ENCODE measurements at regions of chr2 and their contacts with region 1.

Region 1: GRCh38 chr2:173982918-173983317 is 17.7 kb upstream of the SP3 start:
- DNase-seq: peak; percentile 94
- H3K4me3 Mint-ChIP-seq: no peak overlapping the region
- H3K27ac Mint-ChIP-seq: peak overlapping the region; percentile 79
- H3K4me1 Mint-ChIP-seq: peaks cover 52% of the 10 kb centered on the region
- H3K27me3 Mint-ChIP-seq: no peaks in the 10 kb centered on the region
- CTCF ChIP-seq: no peak

Region 2: DNA sequence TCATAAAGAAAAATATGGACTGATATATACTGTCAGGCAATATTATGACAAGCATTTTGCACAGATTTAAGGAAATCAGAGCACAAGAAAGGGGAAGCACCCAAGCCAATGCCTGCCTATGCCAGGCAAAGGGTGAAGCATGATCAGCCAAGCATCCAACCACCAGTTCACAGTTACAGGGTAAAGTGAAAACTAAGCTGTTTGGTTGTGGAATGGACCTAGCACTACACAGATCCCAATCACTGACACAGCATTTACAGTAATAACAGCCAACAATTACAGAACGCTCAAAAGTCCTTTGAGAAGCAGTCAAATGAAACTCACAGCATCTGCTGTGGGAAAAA is 108.1 kb before region 1 on chr2:
- CTCF ChIA-PET with region 1: no interaction called
- POLR2A ChIA-PET with region 1: no interaction called
- intact Hi-C with region 1: no loop called
- DNase-seq: no peak
- H3K4me3 Mint-ChIP-seq: no peak overlapping the region
- H3K27ac Mint-ChIP-seq: no peak overlapping the region
- H3K4me1 Mint-ChIP-seq: no peaks in the 10 kb centered on the region
- H3K27me3 Mint-ChIP-seq: peaks cover 6% of the 10 kb centered on the region
- CTCF ChIP-seq: no peak

Region 3: GRCh38 chr2:173972603-173973002 is 10.3 kb before region 1 on chr2:
- CTCF ChIA-PET with region 1: interaction called, 3 read pairs
- POLR2A ChIA-PET with region 1: interaction called, 25 read pairs
- intact Hi-C with region 1: no loop called
- DNase-seq: no peak
- H3K4me3 Mint-ChIP-seq: no peak overlapping the region
- H3K27ac Mint-ChIP-seq: no peak overlapping the region
- H3K4me1 Mint-ChIP-seq: peaks cover 7% of the 10 kb centered on the region
- H3K27me3 Mint-ChIP-seq: no peaks in the 10 kb centered on the region
- CTCF ChIP-seq: no peak

Region 4: GRCh38 chr2:174117951-174118930 is 135.3 kb after region 1 on chr2:
- CTCF ChIA-PET with region 1: no interaction called
- POLR2A ChIA-PET with region 1: no interaction called
- intact Hi-C with region 1: no loop called
- DNase-seq: peak; percentile 47
- H3K4me3 Mint-ChIP-seq: peak overlapping the region; percentile 8
- H3K27ac Mint-ChIP-seq: peak overlapping the region; percentile 79
- H3K4me1 Mint-ChIP-seq: peaks cover 21% of the 10 kb centered on the region
- H3K27me3 Mint-ChIP-seq: no peaks in the 10 kb centered on the region
- CTCF ChIP-seq: no peak

Region 5: GRCh38 chr2:174764280-174765255 is 781.6 kb after region 1 on chr2 and contains the start of gene CHRNA1:
- CTCF ChIA-PET with region 1: no interaction called
- POLR2A ChIA-PET with region 1: no interaction called
- intact Hi-C with region 1: no loop called
- DNase-seq: no peak
- H3K4me3 Mint-ChIP-seq: no peak within 1 kb of the TSS
- H3K27ac Mint-ChIP-seq: no peak within 1 kb of the TSS
- H3K4me1 Mint-ChIP-seq: no peaks in the 10 kb centered on the region
- H3K27me3 Mint-ChIP-seq: no peaks in the 10 kb centered on the region
- CTCF ChIP-seq: no peak
- total RNA-seq, gene CHRNA1: not detected in 2 replicates